ENCODE measurements at regions of chr1 and their contacts with region 1.

Region 1: GRCh38 chr1:7042322-7043190 is 257.3 kb downstream of the CAMTA1 start:
- DNase-seq: peak; percentile 40
- H3K4me3 ChIP-seq: no peak overlapping the region
- H3K27ac ChIP-seq: no peak overlapping the region
- H3K4me1 ChIP-seq: no peaks in the 10 kb centered on the region
- CTCF ChIP-seq: peak; percentile 82

Region 2: DNA sequence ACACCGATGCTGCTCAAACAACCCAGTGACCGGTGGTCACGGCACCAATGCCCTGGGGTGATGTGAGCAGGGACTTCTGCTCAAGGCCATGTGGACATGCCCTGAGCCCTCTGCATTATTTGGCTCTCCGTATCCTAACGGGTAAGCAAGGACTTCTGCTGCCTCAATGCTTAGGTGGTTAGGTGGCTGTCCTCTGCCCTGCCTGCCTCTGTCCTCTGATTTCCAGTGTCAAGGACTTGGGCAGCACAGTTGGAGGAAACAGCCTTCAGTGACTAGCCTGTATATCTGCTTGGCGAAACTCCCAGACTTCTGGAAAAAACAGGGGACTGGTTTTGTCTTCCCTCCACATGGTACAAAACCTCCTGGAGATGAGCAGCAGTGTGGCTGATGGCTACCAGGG is 375.4 kb before region 1 on chr1:
- CTCF ChIA-PET with region 1: no interaction called
- POLR2A ChIA-PET with region 1: no interaction called
- intact Hi-C with region 1: no loop called
- DNase-seq: no peak
- H3K4me3 ChIP-seq: no peak overlapping the region
- H3K27ac ChIP-seq: no peak overlapping the region
- H3K4me1 ChIP-seq: no peaks in the 10 kb centered on the region
- CTCF ChIP-seq: no peak

Region 3: DNA sequence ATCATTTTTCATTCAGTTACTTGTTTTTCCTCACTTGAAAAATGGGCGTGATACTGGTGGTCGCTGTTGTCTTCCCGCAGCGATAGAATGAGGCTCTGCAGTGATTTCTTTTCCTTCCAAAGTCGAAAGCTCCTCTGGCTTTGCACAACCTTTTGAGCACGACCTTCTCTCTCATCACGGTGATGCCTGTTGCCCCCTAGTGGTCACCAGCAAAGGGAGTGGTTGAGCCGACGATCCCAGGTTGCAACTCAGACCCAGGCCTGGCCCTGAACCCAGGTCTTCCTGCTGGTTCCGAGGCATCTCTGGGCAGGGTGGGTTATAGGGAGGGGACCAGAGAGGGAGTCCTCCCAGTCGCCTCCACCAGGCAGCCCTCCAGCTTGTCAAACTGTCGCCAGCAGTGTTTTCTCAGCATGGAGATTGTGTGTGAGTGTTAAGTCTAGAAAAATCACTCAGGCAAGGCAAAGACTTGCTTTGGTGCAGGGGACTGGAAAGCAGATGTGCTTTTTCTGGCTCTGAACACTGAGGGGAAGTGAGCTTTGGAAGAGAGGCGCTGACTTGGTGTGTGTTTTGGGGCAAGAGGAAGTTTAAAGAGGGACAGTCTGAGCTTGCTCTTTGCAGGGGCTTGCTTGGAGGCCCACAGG is 28.0 kb after region 1 on chr1:
- CTCF ChIA-PET with region 1: no interaction called
- POLR2A ChIA-PET with region 1: no interaction called
- intact Hi-C with region 1: no loop called
- DNase-seq: peak; percentile 56
- H3K4me3 ChIP-seq: no peak overlapping the region
- H3K27ac ChIP-seq: no peak overlapping the region
- H3K4me1 ChIP-seq: no peaks in the 10 kb centered on the region
- CTCF ChIP-seq: peak; percentile 91

Region 4: DNA sequence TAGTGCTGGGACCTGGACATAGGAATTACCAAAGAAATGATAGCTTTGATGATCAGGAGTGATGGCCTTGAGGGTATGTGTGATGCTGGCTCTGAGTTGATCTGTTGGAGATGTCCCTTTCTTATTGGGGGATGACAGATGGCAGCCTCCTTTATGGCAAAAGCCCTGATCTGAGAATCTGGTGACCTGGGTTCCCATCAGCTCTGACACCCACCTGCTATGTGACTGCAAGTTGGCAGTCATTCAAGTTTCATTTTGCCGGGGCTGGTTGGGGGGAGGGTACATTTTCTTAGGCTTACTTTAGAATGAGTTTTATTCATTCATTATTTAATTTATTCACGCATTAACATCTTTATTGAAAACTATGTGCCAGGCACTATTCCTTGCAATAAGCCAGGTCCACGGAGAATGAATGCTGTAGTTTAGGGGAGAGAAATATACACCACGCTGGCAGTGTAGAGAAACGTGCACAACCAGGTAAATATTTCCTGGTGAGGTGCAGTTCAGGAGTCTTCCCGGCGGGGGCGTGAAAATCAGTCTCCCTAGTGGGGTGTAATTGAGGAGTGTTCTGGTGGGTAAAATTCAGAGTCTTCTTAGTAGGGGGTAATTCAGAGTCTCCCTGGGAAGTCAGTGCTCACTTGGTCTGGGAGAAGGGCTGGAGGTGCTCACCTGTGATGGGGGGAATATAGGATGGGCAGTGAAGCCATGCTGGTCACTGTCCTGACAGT is 144.0 kb after region 1 on chr1:
- CTCF ChIA-PET with region 1: no interaction called
- POLR2A ChIA-PET with region 1: no interaction called
- intact Hi-C with region 1: no loop called
- DNase-seq: no peak
- H3K4me3 ChIP-seq: no peak overlapping the region
- H3K27ac ChIP-seq: no peak overlapping the region
- H3K4me1 ChIP-seq: no peaks in the 10 kb centered on the region
- CTCF ChIP-seq: no peak

Region 5: DNA sequence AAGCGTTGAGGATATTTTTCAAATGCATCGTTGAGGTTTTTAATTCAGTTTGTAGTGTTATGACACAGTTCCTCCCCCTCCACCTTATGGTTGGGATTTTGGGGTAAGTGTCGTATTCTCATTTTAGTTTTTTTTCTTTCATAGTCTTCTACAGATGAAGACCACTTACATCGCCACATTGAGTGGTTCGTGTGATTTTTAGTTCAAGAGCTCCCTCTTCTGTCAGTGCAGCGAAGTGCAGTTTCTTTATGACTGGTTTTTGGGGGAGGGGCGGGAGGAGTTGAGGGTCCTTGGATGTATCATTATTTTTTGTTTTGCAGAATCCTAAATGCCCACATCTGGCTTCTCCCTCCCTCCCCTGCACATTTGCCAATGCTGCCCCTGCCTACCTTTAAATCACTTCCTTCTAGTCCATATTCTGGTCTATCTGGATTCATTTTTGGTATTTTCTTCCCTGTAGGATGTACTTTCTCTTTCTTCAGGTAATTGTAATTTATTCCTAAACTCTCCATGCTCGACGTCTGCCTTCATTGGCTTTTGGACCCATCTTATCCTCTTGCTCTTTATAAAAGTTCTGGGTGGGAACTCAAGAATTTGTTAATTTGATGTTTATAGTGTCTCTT is 175.8 kb after region 1 on chr1:
- CTCF ChIA-PET with region 1: no interaction called
- POLR2A ChIA-PET with region 1: no interaction called
- intact Hi-C with region 1: loop called (anchors 5 kb)
- DNase-seq: peak; percentile 55
- H3K4me3 ChIP-seq: no peak overlapping the region
- H3K27ac ChIP-seq: no peak overlapping the region
- H3K4me1 ChIP-seq: no peaks in the 10 kb centered on the region
- CTCF ChIP-seq: peak; percentile 92

Region 6: DNA sequence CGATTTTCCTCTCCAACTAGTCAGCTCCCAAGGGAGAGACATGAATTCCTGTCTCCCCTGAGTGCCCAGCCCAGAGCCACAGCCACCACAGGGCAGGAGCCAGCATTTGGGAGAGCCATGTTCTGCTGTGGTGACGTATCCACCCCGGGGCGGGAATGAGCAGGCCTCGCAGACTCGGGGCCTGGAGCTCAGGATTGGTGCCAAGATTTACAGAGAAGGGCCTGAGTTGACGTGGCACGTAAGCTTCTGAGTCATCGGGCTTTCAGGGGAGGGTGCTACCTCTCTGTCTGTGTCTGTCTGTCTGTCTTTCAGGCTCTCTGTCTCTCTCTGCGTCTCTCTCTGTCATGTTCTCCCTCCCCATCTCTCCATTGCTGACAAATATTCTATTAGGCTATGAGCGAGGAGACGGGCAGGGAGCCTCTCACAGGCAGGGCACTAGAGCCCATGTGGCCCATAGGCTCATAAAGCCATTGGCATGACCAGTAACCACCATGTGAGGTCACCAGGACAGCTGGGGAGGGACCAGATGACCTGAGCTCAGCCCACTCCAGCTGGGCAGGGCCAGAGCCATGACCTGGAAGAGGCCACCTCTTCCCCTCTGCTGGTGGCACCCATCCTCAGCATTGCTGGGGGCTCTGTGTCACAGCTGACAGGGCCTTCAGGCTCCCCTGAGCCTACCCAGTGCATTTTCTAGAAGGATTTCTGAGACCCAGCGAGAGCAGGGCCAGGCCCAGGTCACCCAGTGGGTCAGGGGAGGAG is 428.5 kb after region 1 on chr1:
- CTCF ChIA-PET with region 1: no interaction called
- POLR2A ChIA-PET with region 1: no interaction called
- intact Hi-C with region 1: no loop called
- DNase-seq: no peak
- H3K4me3 ChIP-seq: no peak overlapping the region
- H3K27ac ChIP-seq: no peak overlapping the region
- H3K4me1 ChIP-seq: no peaks in the 10 kb centered on the region
- CTCF ChIP-seq: no peak

Region 7: GRCh38 chr1:7646981-7647901 is 604.7 kb after region 1 on chr1:
- CTCF ChIA-PET with region 1: no interaction called
- POLR2A ChIA-PET with region 1: no interaction called
- intact Hi-C with region 1: loop called (anchors 2 kb)
- DNase-seq: peak; percentile 50
- H3K4me3 ChIP-seq: no peak overlapping the region
- H3K27ac ChIP-seq: no peak overlapping the region
- H3K4me1 ChIP-seq: no peaks in the 10 kb centered on the region
- CTCF ChIP-seq: peak; percentile 96

Measured in OCI-LY7 (cell line).